GM10248 (cell line): ENCODE measurements at regions of chr19 and their contacts with region 1.

Region 1: GRCh38 chr19:18846862-18847548 is 15.2 kb downstream of the UPF1 start:
- DNase-seq: peak; percentile 78
- CTCF ChIP-seq: peak; percentile 84

Region 2: GRCh38 chr19:18450931-18451845 is 395.8 kb before region 1 on chr19:
- CTCF ChIA-PET with region 1: interaction called, 15 read pairs
- POLR2A ChIA-PET with region 1: no interaction called
- DNase-seq: peak; percentile 91
- CTCF ChIP-seq: peak; percentile 98

Region 3: GRCh38 chr19:18594096-18594823 is 252.7 kb before region 1 on chr19:
- CTCF ChIA-PET with region 1: interaction called, 21 read pairs
- POLR2A ChIA-PET with region 1: no interaction called
- DNase-seq: peak; percentile 92
- CTCF ChIP-seq: peak; percentile 83

Region 4: GRCh38 chr19:18612772-18613588 is 234.0 kb before region 1 on chr19 and contains the start of gene TMEM59L:
- CTCF ChIA-PET with region 1: no interaction called
- POLR2A ChIA-PET with region 1: no interaction called
- DNase-seq: peak; percentile 39
- CTCF ChIP-seq: no peak

Region 5: GRCh38 chr19:18756896-18757295 is 90.1 kb before region 1 on chr19:
- CTCF ChIA-PET with region 1: no interaction called
- POLR2A ChIA-PET with region 1: no interaction called
- DNase-seq: no peak
- CTCF ChIP-seq: no peak

Region 6: DNA sequence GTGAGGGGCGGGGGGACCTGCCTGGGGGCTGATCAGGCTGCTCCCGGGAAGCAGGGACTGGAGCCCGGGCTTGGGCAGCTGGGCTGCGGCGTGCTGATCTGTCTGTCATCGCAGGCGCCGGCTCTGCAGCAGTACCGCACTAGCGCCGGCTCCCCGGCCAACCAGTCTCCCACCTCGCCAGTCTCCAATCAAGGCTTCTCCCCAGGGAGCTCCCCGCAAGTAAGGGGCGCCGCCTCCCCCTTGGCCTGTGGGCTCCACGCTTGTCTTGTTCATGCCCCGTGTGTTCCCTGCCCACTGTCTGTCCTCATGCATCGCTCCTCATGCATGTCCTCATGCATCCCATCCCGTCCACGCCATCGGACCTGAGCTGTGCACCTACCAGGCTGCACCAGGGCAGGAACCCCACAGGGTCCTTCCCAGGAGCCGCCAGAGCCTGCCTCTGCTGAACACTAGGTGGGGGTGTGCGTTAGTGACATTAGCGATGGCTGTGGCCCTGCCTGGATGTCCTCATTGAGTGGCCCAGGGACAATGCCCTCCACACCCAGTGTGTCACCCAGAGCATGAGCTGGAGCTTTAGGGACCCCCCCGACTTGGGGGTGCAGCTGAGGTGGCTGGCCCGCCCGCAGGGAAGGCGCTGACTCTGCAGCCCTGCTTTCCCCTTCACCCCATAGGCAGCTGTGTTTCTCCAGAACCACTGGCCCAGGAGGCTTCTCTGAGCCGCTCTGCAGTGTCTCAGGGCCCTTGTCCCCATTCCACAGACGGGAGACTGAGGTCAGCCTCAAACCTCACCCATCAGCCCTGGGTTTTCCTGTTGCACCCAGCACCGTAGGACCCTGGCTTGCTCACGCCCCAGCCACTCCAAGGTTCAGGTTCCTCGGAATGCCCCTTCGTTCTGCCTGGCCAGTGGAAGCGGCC is 75.4 kb before region 1 on chr19:
- CTCF ChIA-PET with region 1: interaction called, 12 read pairs
- POLR2A ChIA-PET with region 1: no interaction called
- DNase-seq: no peak
- CTCF ChIP-seq: peak; percentile 25

Region 7: DNA sequence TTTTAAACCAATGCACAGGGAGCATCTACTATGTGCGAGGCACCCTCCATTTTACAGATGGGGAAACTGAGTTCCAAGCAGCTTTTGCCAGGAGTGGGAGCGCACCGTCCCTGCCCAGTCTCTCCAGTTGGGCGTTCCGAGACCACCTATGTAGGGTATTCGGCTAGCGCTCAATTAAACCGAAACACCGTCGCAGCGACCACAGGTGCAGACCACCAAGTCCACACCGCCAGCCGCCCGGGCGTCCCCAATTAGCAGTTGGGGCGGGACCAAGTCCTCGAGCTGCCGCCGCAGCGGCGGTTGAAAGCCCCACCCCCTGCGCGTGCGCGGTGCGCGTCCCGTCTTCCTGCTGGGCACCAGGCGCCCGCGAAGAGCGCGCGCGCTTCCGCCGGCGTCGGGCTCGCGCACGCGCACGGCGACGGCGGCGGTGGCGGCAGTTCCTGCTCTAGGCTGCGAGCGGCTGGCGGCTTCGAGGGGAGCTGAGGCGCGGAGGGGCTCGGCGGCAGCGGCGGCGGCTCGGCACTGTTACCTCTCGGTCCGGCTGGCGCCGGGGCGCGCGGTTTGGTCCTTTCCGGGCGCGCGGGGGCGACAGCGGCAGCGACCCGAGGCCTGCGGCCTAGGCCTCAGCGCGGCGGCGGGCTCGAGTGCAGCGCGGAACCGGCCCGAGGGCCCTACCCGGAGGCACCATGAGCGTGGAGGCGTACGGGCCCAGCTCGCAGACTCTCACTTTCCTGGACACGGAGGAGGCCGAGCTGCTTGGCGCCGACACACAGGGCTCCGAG is 15.3 kb before region 1 on chr19 and contains the start of gene UPF1:
- CTCF ChIA-PET with region 1: interaction called, 158 read pairs
- POLR2A ChIA-PET with region 1: interaction called, 6 read pairs
- DNase-seq: peak; percentile 97
- CTCF ChIP-seq: no peak

Region 8: DNA sequence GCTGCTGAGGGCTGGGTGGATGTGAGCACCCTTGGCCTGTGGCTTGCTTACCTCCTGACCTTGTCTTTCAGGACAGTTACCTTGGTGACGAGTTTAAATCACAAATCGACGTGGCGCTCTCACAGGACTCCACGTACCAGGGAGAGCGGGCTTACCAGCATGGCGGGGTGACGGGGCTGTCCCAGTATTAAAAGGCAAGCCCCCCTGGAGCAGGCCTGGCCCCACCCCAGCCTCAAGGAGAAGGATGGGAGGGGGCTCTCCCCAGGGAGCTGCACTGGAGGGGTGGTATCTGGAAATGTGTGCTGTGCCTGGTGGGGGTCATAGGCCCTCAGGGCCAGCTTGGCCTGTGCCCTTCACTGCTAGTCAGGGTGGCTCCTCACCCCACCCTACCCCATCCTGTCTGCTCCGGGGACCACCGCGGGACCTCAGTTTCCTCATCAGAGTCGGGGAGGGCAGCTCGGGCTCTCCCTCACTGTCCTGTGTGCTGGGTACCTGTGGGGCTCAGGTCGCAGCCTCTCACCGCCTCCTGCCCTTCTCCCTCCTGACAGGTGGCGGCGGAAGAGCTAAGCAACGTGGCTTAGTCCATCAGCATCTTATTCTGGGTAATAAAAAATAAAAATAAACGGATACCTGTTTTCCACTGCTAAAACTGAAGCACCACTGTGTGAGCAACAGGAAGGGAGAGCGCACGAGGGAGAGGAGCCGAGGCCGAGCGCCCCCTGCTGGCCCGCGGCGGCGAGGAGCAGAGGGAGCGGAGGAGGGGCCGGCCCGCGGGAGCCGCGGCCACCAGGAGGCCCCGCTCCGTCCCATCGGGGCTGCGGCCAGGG is 19.2 kb after region 1 on chr19:
- CTCF ChIA-PET with region 1: interaction called, 60 read pairs
- POLR2A ChIA-PET with region 1: no interaction called
- DNase-seq: peak; percentile 92
- CTCF ChIP-seq: peak; percentile 93

Region 9: DNA sequence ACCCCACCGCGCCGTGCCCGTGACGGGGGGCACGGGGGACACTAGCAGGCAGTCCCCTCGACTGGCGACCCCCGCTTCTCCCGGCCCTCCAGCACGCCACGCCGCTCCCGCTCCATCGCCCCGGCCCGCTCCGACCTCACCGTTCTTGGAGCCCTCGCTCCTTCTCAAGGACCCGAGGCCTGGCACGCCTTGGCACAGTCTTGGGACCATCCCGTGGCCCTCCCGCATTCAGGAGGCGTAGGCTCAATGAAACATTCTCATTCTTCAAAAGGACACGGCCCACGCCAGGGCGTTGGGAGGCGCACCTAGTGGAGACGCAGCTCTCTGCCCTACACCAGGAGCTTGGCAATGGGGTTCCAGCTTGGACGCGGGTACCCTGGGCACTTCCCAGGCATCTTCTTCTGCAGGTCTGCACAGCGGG is 49.4 kb after region 1 on chr19:
- CTCF ChIA-PET with region 1: no interaction called
- POLR2A ChIA-PET with region 1: no interaction called
- DNase-seq: no peak
- CTCF ChIP-seq: no peak

Region 10: DNA sequence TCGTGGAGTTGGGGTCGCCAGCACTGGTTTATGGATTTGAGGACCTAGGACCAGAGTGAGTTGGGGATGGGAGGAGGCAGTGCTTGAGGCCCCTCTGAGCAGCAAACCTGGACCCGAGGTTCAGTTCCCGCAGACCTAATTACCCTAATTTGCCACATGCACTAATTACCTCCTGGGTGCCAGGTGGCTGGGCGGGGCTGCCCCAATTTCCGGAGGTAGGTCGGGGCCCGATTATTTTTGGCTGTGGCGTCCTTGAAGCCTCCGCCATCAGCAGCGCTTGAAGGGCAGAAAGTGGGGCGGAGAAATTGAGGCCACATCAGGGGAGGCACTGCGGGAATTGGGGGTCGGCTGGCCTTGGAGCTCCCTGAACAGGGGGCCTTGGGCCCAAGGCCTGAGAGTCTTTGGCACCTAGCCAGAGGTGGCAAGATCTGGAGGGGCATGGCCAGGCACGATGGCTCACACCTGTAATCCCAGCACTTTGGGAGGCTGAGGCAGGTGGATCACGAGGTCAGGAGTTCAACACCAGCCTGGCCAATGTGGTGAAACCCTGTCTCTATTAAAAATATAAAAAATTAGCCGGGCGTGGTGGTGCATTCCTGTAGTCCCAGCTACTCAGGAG is 100.0 kb after region 1 on chr19:
- CTCF ChIA-PET with region 1: no interaction called
- POLR2A ChIA-PET with region 1: no interaction called
- DNase-seq: no peak
- CTCF ChIP-seq: no peak